ENCODE measurements at regions of chr4 and their contacts with region 1.

Region 1: DNA sequence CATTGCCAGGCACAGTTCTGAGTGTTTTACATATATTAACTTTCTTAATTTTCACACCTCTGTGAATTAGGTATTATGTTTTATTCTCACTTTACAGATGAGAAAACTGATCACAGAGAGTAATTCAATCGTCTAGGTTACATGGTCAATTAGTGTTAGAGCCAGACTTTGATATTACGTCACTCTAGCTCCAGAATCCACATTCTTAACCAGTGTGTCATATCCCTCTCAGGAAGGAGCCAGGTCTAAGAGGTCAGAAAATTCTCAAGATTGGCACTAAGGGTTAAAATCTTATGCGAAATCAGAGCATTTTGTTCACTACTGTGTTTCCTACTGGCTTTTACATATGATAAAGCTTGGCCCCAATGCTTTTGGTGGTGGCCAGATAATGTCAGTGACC is 7.4 kb downstream of the DMP1 start:
- DNase-seq: no peak
- CTCF ChIP-seq: no peak

Region 2: DNA sequence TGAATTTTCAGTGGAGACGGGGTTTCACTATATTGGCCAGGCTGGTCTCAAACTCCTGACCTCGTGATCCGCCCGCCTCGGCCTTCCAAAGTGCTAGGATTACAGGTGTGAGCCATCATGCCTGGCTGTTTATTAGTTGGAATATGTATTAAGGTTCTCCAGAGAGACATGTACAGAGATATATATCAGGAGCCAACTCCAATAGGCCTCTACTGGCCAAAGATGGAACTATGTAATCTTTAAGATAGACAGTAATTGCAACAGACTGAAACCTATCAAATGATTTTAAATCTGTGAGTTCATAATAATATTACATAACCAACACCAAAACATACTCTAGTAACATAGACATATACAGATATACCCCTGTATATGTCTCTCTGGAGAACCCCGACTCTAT is 13.2 kb before region 1 on chr4:
- CTCF ChIA-PET with region 1: no interaction called
- POLR2A ChIA-PET with region 1: no interaction called
- DNase-seq: no peak
- CTCF ChIP-seq: no peak

Region 3: DNA sequence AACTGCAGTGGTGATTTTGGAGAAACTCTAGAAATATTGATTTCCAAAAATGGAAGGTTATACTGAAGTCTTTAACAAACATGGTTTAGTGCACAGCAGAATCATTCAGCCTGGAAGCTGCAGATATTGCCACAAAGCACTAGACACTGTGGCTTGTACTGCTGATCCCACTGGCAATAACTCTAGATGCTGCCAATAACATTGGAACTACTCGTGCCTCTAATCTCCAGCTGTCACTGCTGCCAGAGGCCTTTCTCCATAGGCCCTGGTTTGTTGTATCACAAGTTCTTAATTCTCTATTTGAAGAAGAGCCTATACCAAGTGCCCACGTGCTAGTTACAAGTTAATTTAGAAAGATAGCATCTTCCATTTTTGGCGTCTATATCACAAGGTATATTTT is 11.8 kb after region 1 on chr4:
- CTCF ChIA-PET with region 1: interaction called, 11 read pairs
- POLR2A ChIA-PET with region 1: no interaction called
- DNase-seq: no peak
- CTCF ChIP-seq: no peak

Region 4: GRCh38 chr4:87720094-87720691 is 62.7 kb after region 1 on chr4:
- CTCF ChIA-PET with region 1: no interaction called
- POLR2A ChIA-PET with region 1: no interaction called
- DNase-seq: no peak
- CTCF ChIP-seq: no peak